ENCODE measurements at regions of chr2 and their contacts with region 1.

Region 1: DNA sequence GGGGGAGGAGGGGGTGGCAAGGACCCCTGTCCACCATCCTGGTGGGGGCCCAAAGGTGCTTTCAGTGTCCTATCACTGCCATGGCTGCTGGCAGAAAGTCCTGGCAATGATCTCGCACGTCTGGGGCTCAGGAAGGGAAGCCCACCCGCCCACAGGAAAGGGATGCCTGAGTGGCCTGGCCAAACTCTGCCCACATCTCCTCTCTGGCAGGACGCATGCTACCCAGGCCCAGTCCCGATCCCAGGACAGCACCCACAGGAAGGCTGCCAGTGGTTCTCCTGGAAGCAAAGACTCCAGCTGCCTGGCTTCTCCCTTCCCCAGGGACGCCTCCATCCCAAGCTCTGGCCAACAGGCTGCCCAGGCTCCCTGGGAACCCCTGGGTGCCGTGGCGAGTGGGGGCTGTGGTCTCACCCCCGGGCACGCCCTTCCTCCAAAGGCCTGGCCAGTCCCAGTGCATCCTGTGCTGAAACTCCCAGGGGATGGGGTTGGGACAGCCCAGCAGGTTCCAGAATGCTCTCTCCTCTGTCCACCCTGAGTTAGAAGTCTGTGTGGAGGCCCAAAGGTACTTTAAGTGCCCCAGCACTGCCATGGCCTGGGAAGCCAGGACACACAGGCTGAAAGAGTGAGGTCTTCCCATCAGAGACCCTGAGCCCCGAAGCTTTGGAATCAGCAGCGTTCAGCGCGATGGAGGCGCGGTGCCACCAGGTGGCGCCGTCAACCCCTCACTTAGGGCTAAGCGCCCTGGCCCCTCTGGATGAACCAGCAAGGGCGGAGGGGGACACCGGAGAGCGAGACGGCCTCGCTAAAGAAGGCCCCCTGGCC is 29.8 kb upstream of the TAF1B start:
- DNase-seq: peak; percentile 74
- H3K4me3 Mint-ChIP-seq: no peak overlapping the region
- H3K27ac Mint-ChIP-seq: no peak overlapping the region
- H3K4me1 Mint-ChIP-seq: peaks cover 6% of the 10 kb centered on the region
- H3K27me3 Mint-ChIP-seq: no peaks in the 10 kb centered on the region
- CTCF ChIP-seq: peak; percentile 95

Region 2: GRCh38 chr2:9739531-9739964 is 74.0 kb before region 1 on chr2:
- CTCF ChIA-PET with region 1: no interaction called
- POLR2A ChIA-PET with region 1: no interaction called
- intact Hi-C with region 1: no loop called
- DNase-seq: no peak
- H3K4me3 Mint-ChIP-seq: no peak overlapping the region
- H3K27ac Mint-ChIP-seq: no peak overlapping the region
- H3K4me1 Mint-ChIP-seq: no peaks in the 10 kb centered on the region
- H3K27me3 Mint-ChIP-seq: no peaks in the 10 kb centered on the region
- CTCF ChIP-seq: no peak

Region 3: DNA sequence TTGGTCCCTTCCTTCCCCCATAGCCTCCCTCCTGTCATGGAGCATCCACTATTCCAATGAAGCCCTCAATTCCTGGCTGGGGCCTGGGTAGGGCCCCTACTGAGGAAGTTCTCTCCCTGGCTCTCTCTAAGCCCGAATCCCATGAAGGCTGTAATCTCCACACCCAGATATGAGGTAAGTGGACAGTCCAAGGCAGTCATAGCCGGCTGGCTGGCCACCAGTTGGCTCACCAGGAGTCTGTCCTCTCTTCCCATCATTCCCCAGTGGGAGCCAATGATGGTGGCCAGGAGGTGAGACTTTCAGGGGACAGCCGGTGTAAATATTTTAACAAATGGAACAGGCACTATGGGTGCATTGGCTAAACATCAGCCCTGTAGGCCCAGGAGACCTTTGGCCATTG is 23.0 kb after region 1 on chr2:
- CTCF ChIA-PET with region 1: interaction called, 50 read pairs
- POLR2A ChIA-PET with region 1: interaction called, 3 read pairs
- intact Hi-C with region 1: no loop called
- DNase-seq: no peak
- H3K4me3 Mint-ChIP-seq: no peak overlapping the region
- H3K27ac Mint-ChIP-seq: peak overlapping the region; percentile 32
- H3K4me1 Mint-ChIP-seq: peaks cover 12% of the 10 kb centered on the region
- H3K27me3 Mint-ChIP-seq: no peaks in the 10 kb centered on the region
- CTCF ChIP-seq: no peak

Region 4: GRCh38 chr2:9897331-9897737 is 83.8 kb after region 1 on chr2:
- CTCF ChIA-PET with region 1: interaction called, 20 read pairs
- POLR2A ChIA-PET with region 1: interaction called, 5 read pairs
- intact Hi-C with region 1: no loop called
- DNase-seq: peak; percentile 99
- H3K4me3 Mint-ChIP-seq: peak overlapping the region; percentile 23
- H3K27ac Mint-ChIP-seq: peak overlapping the region; percentile 78
- H3K4me1 Mint-ChIP-seq: peaks cover 33% of the 10 kb centered on the region
- H3K27me3 Mint-ChIP-seq: no peaks in the 10 kb centered on the region
- CTCF ChIP-seq: no peak

Region 5: DNA sequence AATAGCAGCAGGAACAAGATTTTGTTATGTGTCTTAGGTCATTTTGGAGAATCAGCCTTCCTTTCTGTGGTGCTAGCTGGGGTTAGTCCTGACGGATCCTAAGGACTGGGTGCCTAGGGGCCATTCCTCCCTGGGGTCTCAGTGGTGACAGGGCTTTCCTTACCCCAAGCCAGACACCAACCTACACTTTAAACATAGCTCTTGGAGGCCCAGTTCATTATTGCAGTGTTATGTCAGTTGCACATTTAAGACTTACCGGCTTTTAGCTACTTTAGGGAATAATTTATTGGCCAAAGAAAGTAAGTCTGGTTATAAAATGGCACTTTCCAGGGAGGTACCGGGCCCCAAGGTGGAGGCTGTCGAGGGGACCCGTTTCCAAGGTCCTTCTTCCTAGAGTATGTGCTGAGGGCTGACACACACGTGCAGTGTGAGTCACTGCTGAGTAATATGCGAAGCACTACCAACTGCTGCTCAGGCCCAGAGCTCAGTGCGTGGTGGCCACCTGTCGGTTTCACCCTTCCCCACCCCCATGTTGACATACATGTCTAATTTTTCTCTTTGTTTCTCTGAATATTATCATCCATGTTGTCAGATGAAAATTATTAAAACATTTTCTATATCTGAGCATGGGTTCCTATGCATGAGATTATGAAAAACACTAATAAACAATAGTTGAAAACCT is 101.0 kb after region 1 on chr2:
- CTCF ChIA-PET with region 1: interaction called, 63 read pairs
- POLR2A ChIA-PET with region 1: interaction called, 11 read pairs
- intact Hi-C with region 1: loop called (anchors 1 kb)
- DNase-seq: peak; percentile 92
- H3K4me3 Mint-ChIP-seq: no peak overlapping the region
- H3K27ac Mint-ChIP-seq: peak overlapping the region; percentile 64
- H3K4me1 Mint-ChIP-seq: peaks cover 10% of the 10 kb centered on the region
- H3K27me3 Mint-ChIP-seq: no peaks in the 10 kb centered on the region
- CTCF ChIP-seq: peak; percentile 65

Region 6: GRCh38 chr2:9975805-9976447 is 162.4 kb after region 1 on chr2:
- CTCF ChIA-PET with region 1: interaction called, 10 read pairs
- POLR2A ChIA-PET with region 1: no interaction called
- intact Hi-C with region 1: no loop called
- DNase-seq: peak; percentile 99
- H3K4me3 Mint-ChIP-seq: no peak overlapping the region
- H3K27ac Mint-ChIP-seq: no peak overlapping the region
- H3K4me1 Mint-ChIP-seq: peaks cover 30% of the 10 kb centered on the region
- H3K27me3 Mint-ChIP-seq: no peaks in the 10 kb centered on the region
- CTCF ChIP-seq: no peak

Region 7: GRCh38 chr2:10179422-10179821 is 365.9 kb after region 1 on chr2:
- CTCF ChIA-PET with region 1: no interaction called
- POLR2A ChIA-PET with region 1: no interaction called
- intact Hi-C with region 1: no loop called
- DNase-seq: no peak
- H3K4me3 Mint-ChIP-seq: no peak overlapping the region
- H3K27ac Mint-ChIP-seq: no peak overlapping the region
- H3K4me1 Mint-ChIP-seq: no peaks in the 10 kb centered on the region
- H3K27me3 Mint-ChIP-seq: no peaks in the 10 kb centered on the region
- CTCF ChIP-seq: no peak

Measured in MCF 10A (cell line).